Activated CD4-positive, alpha-beta memory T cell treated with anti-CD3 and anti-CD28 coated beads, Interleukin-2, amount 10 ng/mL, durations not matched to agents 7 days and 5 days (primary cell): ENCODE measurements at regions of chr1 and their contacts with region 1.

Region 1: DNA sequence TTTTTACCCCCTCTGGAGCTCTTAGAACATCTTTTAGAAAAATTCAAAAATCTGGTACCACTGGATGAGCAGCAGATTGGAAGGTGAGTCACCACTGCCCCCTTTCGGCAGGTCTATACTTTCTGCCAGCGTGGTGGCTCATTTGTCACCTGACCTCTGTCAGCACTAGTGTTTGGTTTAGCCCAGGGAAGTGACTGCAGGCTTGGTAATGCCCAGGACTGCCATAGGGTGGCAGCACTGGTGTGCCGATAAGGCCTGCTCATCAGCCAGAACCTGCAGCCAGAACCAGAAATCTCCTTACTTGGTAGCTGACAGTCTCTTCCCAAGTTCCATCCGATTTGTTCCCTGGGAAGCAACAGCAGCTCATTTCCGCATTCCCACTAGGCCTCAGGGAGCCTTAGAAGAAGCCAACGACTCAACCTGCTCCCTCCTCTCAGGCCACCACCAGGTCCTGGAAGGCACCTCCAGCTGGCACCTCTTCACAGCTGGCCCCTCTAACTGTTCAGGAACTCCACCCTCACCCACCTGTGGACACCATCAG is 6.8 kb downstream of the SMIM12 start:
- DNase-seq: peak; percentile 92
- H3K4me3 Mint-ChIP-seq: no peak overlapping the region
- H3K27ac Mint-ChIP-seq: peak overlapping the region; percentile 61
- H3K4me1 Mint-ChIP-seq: peaks cover 21% of the 10 kb centered on the region
- H3K27me3 Mint-ChIP-seq: no peaks in the 10 kb centered on the region

Region 2: DNA sequence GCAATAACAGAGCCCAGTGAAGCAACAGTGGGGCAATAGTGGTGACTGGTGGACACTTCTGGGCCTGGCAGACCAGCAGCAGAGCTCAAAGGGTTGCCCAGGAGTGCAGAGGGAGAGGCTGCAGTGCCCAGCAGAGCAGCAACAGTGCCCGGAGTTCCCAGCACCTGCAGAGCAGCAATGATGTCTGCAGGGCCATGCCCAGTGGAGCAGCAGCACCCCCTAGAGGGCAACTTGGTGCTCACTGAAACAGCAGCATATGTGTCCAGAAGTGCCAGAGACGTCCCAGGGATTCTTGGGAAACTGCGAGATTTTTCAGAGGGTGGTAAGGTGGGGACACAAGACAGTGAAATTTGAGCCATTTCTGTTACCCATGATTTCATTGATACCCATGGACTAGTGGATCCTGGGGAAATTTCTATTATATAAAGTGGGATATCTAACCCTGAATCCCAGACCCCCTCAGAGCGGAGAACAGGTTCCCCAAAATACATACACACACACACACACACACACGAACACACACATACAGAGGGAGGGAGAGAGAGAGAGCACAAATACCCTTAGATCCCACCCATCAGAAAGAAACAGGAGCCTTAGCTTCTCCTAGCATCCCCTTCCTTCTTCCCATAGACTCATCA is 254.8 kb before region 1 on chr1:
- CTCF ChIA-PET with region 1: no interaction called
- POLR2A ChIA-PET with region 1: no interaction called
- DNase-seq: peak; percentile 64
- H3K4me3 Mint-ChIP-seq: no peak overlapping the region
- H3K27ac Mint-ChIP-seq: no peak overlapping the region
- H3K4me1 Mint-ChIP-seq: no peaks in the 10 kb centered on the region
- H3K27me3 Mint-ChIP-seq: peaks cover 3% of the 10 kb centered on the region

Region 3: GRCh38 chr1:34786521-34787325 is 66.0 kb before region 1 on chr1:
- CTCF ChIA-PET with region 1: interaction called, 13 read pairs
- POLR2A ChIA-PET with region 1: interaction called, 3 read pairs
- DNase-seq: peak; percentile 71
- H3K4me3 Mint-ChIP-seq: no peak overlapping the region
- H3K27ac Mint-ChIP-seq: no peak overlapping the region
- H3K4me1 Mint-ChIP-seq: peaks cover 3% of the 10 kb centered on the region
- H3K27me3 Mint-ChIP-seq: peaks cover 59% of the 10 kb centered on the region

Region 4: GRCh38 chr1:34865981-34866761 is 13.4 kb after region 1 on chr1:
- CTCF ChIA-PET with region 1: interaction called, 38 read pairs
- POLR2A ChIA-PET with region 1: interaction called, 9 read pairs
- DNase-seq: peak; percentile 91
- H3K4me3 Mint-ChIP-seq: peak overlapping the region; percentile 77
- H3K27ac Mint-ChIP-seq: peak overlapping the region; percentile 69
- H3K4me1 Mint-ChIP-seq: peaks cover 26% of the 10 kb centered on the region
- H3K27me3 Mint-ChIP-seq: peaks cover 11% of the 10 kb centered on the region